Uterus (tissue), 4 donors: ENCODE measurements at regions of chr10 and their contacts with region 1.

Region 1: GRCh38 chr10:120942806-120943413 is 91.7 kb downstream of the WDR11 start:
- DNase-seq: peak; percentile 78 to 84
- H3K4me3 ChIP-seq: no peak overlapping the region
- H3K27ac ChIP-seq: peak overlapping the region in 1 of 2 donors; percentile 80
- H3K4me1 ChIP-seq: peaks cover 3 to 4% of the 10 kb centered on the region in 2 donors
- H3K27me3 ChIP-seq: no peaks in the 10 kb centered on the region
- CTCF ChIP-seq: peak; percentile 82 to 95 (median 88)
- POLR2A ChIP-seq: no peak

Region 2: GRCh38 chr10:120041807-120042559 is 900.9 kb before region 1 on chr10:
- intact Hi-C with region 1: no loop called
- DNase-seq: no peak
- H3K4me3 ChIP-seq: no peak overlapping the region
- H3K27ac ChIP-seq: no peak overlapping the region
- H3K4me1 ChIP-seq: no peaks in the 10 kb centered on the region
- H3K27me3 ChIP-seq: no peaks in the 10 kb centered on the region
- CTCF ChIP-seq: no peak
- POLR2A ChIP-seq: no peak

Region 3: GRCh38 chr10:120253131-120253530 is 689.8 kb before region 1 on chr10:
- intact Hi-C with region 1: no loop called
- DNase-seq: no peak
- H3K4me3 ChIP-seq: no peak overlapping the region
- H3K27ac ChIP-seq: no peak overlapping the region
- H3K4me1 ChIP-seq: no peaks in the 10 kb centered on the region
- H3K27me3 ChIP-seq: no peaks in the 10 kb centered on the region
- CTCF ChIP-seq: no peak
- POLR2A ChIP-seq: no peak

Region 4: GRCh38 chr10:120850911-120851865 is 91.7 kb before region 1 on chr10 and contains the start of gene WDR11:
- intact Hi-C with region 1: no loop called
- DNase-seq: peak; percentile 84 to 86
- H3K4me3 ChIP-seq: peak within 1 kb of the TSS; percentile 68 to 81
- H3K27ac ChIP-seq: peak within 1 kb of the TSS; percentile 70 to 90
- H3K4me1 ChIP-seq: peaks cover 0 to 3% of the 10 kb centered on the region in 2 donors
- H3K27me3 ChIP-seq: no peaks in the 10 kb centered on the region
- CTCF ChIP-seq: no peak
- POLR2A ChIP-seq: peak in 1 of 2 donors; percentile 58
- total RNA-seq, gene WDR11: 68.6 to 102 (median 79.5) TPM

Region 5: DNA sequence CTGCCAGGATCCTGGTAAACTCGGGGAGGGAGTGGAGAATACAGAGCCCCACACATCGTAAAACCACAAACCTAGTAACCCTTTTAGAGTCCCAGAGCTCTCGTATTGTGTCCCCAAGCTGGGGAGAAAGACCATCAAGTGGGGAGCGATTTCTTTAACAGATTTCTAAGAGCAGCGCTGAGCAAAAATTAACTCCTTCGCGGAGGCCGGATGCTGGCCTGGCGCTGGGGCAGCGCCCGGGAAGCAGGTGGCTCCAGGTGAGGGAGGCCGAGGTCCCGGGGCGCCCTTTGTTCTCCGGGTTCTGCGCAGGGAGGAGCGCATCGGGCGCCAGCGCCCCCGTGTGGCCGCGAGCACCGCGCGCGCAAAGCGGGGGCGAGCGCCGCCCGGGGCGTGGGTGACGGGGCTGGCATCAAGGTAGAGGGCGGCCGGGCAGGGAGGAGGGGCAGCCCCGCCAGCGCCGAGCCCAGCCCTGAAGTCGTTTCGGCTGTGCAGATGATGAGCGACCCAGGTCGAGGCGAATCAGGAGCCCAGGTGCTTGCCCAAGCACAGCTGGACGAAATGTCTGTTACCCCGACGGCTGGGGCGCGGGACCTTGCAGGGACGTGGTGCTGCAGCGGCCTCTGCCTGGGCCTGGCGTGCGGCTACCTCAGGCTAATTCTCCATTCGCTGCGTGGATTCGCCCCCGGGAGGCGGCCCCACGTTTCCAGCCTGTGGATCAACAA is 665.7 kb after region 1 on chr10:
- intact Hi-C with region 1: loop called (anchors 5 kb)
- DNase-seq: peak in 1 of 2 donors; percentile 57
- H3K4me3 ChIP-seq: peak overlapping the region; percentile 13 to 29
- H3K27ac ChIP-seq: no peak overlapping the region
- H3K4me1 ChIP-seq: no peaks in the 10 kb centered on the region
- H3K27me3 ChIP-seq: no peaks in the 10 kb centered on the region
- CTCF ChIP-seq: peak; percentile 70 to 93 (median 86)
- POLR2A ChIP-seq: peak in 1 of 2 donors; percentile 16

Region 6: GRCh38 chr10:121734589-121735045 is 791.7 kb after region 1 on chr10:
- intact Hi-C with region 1: loop called (anchors 10 kb)
- DNase-seq: no peak
- H3K4me3 ChIP-seq: no peak overlapping the region
- H3K27ac ChIP-seq: no peak overlapping the region
- H3K4me1 ChIP-seq: no peaks in the 10 kb centered on the region
- H3K27me3 ChIP-seq: no peaks in the 10 kb centered on the region
- CTCF ChIP-seq: peak; percentile 22 to 59 (median 48)
- POLR2A ChIP-seq: no peak